Activated T-helper 2 cell treated with anti-CD3 and anti-CD28 coated beads, Interferon-gamma antibody, Interleukin-2, Interleukin-4, amounts not matched to agents 10 μg/mL and 5 μg/mL and 100 μg/mL, durations not matched to agents 14 hours and 24 hours and 36 hours (primary cell): ENCODE measurements at regions of chr14 and their contacts with region 1.

Region 1: DNA sequence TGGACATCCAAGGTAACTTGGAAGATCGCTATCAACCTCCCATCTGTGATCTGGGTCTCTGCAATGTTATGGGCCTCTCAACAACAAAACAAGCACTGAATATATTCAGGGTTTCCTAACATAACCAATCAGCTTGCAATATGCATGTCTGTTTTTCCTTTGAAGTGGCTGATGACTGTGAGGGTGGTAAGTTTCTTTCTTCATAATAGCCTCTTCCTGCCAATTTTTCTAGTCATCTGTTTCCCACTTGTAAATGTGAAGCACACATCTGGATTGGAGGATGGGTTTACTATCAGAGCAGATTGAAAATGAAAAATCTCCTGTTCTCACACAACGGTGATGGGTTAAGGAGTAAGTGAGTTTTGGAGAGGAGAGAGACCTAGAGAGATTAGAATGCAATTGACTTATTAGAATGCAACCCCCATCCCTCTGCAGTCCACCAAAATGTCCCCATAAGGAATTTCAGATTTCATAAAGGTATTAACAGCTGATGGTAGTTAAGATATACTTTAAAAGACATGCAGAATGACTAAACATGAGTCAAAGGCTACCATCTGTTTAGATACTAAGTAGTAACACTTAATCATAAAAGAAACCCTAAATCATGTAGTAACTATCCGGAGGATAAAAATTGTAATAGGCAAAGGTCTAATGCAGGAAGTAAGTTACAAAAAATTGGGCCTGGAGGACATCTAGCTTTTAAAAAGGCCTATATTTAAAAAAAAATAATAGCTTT is 58.4 kb upstream of the SAV1 start:
- DNase-seq: peak; percentile 24
- H3K4me3 Mint-ChIP-seq: peak overlapping the region; percentile 55
- H3K27ac Mint-ChIP-seq: peak overlapping the region; percentile 92
- H3K4me1 Mint-ChIP-seq: peaks cover 32% of the 10 kb centered on the region
- H3K27me3 Mint-ChIP-seq: no peaks in the 10 kb centered on the region

Region 2: DNA sequence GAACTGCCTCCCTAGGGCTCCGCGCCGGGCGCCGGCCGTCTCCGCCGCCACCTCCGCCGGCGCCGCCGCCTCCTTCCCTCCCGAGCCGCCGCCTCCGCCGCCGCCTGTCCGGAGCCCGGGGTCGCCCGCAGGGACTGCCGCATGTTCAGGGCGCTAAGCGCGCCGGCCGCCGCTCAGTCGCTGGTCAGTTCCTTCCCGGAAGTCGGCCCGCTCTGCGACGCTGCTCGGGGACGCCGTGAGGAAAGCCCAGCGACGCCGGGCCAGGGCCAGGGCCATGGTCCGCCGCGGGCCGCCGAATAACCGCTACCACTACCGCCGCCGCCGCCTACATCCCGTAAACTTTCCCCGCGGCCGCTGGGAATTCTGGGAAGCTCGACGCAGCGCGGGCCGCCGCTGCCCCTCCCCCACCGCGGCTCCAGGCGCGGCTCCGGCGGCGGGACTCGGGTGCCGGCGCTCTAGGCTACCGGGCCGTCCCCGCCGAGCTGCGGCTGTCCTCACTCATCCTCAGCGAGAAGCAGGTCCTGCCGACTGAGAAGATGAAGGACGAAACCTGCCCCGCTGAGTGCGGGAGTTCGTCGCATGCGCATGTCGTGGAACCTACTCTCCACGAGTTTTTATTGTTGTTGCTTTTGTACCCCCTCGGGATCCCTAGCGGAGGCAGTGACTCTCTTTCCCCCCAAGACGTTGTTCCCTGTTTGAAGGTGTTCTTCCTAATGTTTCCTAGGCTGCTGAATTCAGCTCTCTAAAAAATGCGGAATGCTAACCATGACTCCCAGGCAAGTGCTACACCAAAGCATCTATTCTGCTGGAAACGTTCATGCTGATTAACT is 58.3 kb before region 1 on chr14 and contains the start of gene SAV1:
- intact Hi-C with region 1: loop called (anchors 2 kb)
- DNase-seq: peak; percentile 36
- H3K4me3 Mint-ChIP-seq: no peak within 1 kb of the TSS
- H3K27ac Mint-ChIP-seq: peak within 1 kb of the TSS; percentile 47
- H3K4me1 Mint-ChIP-seq: peaks cover 15% of the 10 kb centered on the region
- H3K27me3 Mint-ChIP-seq: no peaks in the 10 kb centered on the region
- total RNA-seq, gene SAV1: 13.1 and 13.5 TPM in 2 replicates

Region 3: GRCh38 chr14:50704454-50705010 is 22.0 kb before region 1 on chr14:
- intact Hi-C with region 1: no loop called
- DNase-seq: no peak
- H3K4me3 Mint-ChIP-seq: no peak overlapping the region
- H3K27ac Mint-ChIP-seq: no peak overlapping the region
- H3K4me1 Mint-ChIP-seq: no peaks in the 10 kb centered on the region
- H3K27me3 Mint-ChIP-seq: peaks cover 10% of the 10 kb centered on the region

Region 4: GRCh38 chr14:50736932-50737419 is 10.4 kb after region 1 on chr14:
- intact Hi-C with region 1: loop called (anchors 1 kb)
- DNase-seq: peak; percentile 24
- H3K4me3 Mint-ChIP-seq: no peak overlapping the region
- H3K27ac Mint-ChIP-seq: peak overlapping the region; percentile 28
- H3K4me1 Mint-ChIP-seq: peaks cover 28% of the 10 kb centered on the region
- H3K27me3 Mint-ChIP-seq: no peaks in the 10 kb centered on the region

Region 5: GRCh38 chr14:50762001-50762930 is 35.7 kb after region 1 on chr14:
- intact Hi-C with region 1: loop called (anchors 1 kb)
- DNase-seq: no peak
- H3K4me3 Mint-ChIP-seq: no peak overlapping the region
- H3K27ac Mint-ChIP-seq: peak overlapping the region; percentile 63
- H3K4me1 Mint-ChIP-seq: peaks cover 21% of the 10 kb centered on the region
- H3K27me3 Mint-ChIP-seq: no peaks in the 10 kb centered on the region

Region 6: GRCh38 chr14:50773632-50774541 is 47.3 kb after region 1 on chr14:
- intact Hi-C with region 1: loop called (anchors 5 kb)
- DNase-seq: no peak
- H3K4me3 Mint-ChIP-seq: no peak overlapping the region
- H3K27ac Mint-ChIP-seq: no peak overlapping the region
- H3K4me1 Mint-ChIP-seq: peaks cover 15% of the 10 kb centered on the region
- H3K27me3 Mint-ChIP-seq: no peaks in the 10 kb centered on the region

Region 7: DNA sequence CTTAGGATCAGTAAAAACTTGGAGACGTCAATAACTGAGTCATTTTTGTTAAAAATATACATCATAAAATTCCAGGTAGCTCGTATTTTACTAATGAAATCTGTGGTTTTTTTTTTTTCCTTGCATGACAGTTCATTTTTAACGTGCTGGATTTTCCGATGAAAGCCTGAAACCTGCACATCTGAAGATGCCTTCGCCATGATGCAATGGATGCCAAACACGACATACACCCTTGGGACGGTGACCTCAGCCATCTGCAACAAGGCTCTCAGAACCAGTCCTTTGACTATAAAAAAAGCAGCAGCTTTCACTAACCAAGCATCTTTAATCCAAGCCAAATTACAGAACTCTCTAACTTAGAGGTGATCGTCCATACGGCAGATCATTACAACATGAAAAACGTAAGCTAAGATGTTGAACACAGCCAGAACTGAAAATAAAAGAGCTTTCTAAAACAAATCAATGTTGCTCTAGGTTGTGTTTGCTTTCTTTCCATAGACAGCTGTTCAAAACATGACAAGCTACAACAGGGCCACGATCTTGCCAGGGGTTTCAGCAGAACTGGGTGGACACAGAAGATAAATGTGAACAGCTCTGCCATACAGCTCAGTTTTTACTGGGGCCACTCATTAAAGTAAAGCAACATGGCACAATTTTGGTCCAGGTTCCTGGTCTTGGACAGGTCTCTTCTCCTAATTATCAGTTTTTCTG is 96.7 kb after region 1 on chr14:
- intact Hi-C with region 1: loop called (anchors 5 kb)
- DNase-seq: no peak
- H3K4me3 Mint-ChIP-seq: peak overlapping the region; percentile 69
- H3K27ac Mint-ChIP-seq: peak overlapping the region; percentile 77
- H3K4me1 Mint-ChIP-seq: peaks cover 68% of the 10 kb centered on the region
- H3K27me3 Mint-ChIP-seq: no peaks in the 10 kb centered on the region